ENCODE measurements at regions of chr20 and their contacts with region 1.

Region 1: DNA sequence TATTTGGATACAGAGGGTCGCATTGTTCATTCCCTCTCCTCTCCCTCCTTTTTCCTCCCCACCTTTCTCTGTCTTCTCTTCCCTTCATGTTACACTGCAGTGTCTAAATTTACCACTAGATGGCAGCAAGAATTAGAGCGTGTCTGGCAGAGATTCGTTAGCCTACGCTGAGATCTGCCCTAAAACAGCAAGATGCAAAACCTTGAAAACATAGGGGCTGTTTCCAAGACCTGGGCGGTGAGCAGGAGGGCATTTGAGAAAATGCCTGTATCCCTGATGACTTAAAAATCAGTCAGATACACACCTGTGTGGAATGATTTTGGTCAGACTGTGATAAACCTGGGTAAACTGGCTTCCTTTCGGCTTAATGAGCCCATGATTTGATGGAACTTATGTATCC is 101.5 kb upstream of the ISM1 start:
- DNase-seq: peak in 1 of 5 donors; percentile 17
- ATAC-seq: peak in 3 of 4 donors; percentile 72 to 83 (median 72)
- H3K4me3 ChIP-seq: no peak overlapping the region
- H3K27ac ChIP-seq: no peak overlapping the region
- H3K4me1 ChIP-seq: no peaks in the 10 kb centered on the region
- H3K27me3 ChIP-seq: no peaks in the 10 kb centered on the region
- CTCF ChIP-seq: peak; percentile 80 to 91 (median 86)
- POLR2A ChIP-seq: no peak

Region 2: DNA sequence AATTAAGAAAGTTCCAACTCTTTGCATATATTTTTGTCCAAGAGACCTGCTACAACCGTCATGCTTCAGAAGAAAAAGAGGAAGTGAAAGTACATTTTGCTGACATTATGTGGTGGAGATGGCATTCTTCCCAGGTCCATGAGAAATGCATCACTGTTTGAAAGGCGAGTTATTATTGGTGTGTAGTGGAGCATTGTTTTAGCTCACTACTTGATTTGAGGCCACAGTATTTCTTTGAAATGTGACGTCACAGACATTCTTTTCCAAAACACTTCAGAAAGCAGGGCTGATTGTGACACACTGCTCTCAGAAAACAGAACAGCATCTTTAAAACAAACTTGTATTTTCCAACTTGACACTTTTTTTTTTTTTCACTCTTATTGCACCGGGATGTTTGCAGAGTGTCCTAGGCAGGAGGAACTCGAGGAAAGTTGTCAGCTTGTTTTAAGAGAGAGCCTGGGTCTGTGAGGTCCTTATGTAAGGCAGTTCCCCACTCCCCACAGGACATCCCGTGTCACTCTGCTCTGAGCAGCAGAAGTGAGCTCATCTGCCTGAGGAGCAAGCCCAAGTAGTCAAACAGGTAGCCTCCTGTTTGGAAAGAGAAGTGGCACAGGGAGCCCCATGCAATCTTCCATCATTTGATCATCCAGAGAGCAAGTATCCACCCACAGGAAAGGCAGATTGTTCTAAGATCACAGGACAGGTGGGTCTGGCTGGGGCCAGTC is 109.7 kb before region 1 on chr20:
- intact Hi-C with region 1: no loop called
- DNase-seq: peak in 2 of 5 donors; percentile 38 to 55
- ATAC-seq: peak; percentile 88 to 93 (median 89)
- H3K4me3 ChIP-seq: peak overlapping the region in 11 of 12 donors; percentile 24 to 63 (median 53)
- H3K27ac ChIP-seq: peak overlapping the region; percentile 22 to 85 (median 66)
- H3K4me1 ChIP-seq: peaks cover 0 to 28% (median 14%) of the 10 kb centered on the region in 12 donors
- H3K27me3 ChIP-seq: no peaks in the 10 kb centered on the region
- CTCF ChIP-seq: no peak
- POLR2A ChIP-seq: no peak

Region 3: DNA sequence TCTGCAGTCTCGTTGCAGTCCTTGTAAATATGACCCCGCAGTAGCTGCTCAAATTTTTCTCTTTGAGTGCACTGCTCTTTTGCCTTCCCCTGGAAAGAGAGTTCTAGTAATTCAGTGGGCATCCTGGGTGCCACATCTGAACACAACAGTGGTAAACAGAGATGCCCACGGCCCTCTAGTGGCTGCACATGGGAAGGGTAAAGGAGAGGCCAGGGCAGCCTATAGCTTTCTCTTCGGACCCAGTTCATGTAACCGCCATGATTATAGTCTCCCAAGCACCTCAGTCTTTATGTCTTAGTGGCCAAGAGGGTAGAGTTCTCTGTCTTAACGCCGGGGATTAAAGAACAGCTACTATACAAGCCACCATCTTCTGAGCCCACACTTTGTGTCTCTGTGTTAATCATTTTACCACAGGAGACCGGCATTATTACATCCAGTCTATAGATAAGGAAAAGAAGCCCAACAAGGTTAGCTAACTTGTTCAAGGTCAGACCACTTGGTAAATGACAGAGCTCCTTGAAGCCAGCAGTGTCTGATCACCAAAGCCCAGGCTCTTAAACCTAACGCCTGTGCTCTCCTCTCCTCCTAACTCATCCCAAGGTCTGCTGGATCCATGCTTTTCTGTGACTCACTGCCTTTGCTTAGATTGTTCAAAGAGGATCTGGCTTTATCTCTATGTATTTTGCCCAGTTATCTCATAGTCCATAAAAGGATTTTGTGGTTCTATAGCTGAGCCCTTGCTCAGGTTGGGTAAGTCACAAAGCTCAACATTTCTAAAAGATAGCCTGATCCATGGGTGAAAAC is 183.3 kb after region 1 on chr20:
- intact Hi-C with region 1: loop called in 9 of 10 experiments (anchors 2 to 10 kb)
- DNase-seq: no peak
- ATAC-seq: peak in 3 of 4 donors; percentile 47 to 82 (median 54)
- H3K4me3 ChIP-seq: no peak overlapping the region
- H3K27ac ChIP-seq: no peak overlapping the region
- H3K4me1 ChIP-seq: no peaks in the 10 kb centered on the region
- H3K27me3 ChIP-seq: no peaks in the 10 kb centered on the region
- CTCF ChIP-seq: peak; percentile 39 to 65 (median 52)
- POLR2A ChIP-seq: no peak

Region 4: DNA sequence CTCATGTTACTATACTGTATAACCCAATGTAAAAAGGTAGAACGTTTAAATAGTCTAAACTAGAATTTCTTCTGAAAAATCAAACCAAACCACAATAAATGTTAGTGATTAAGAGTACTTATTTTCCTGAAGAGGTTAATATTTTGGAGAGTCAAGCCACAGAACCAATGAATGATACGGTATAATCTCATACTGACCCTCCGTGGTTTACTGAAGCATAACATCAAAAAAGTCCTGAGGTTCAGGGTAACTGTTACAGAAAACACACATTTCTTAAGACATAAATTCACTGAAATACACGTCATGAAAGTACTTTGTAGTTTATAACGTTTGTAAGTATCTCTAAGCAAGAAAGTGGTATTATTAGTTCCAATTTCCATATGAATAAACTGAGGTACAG is 636.2 kb after region 1 on chr20:
- intact Hi-C with region 1: loop called in 3 of 10 experiments (anchors 10 kb)
- DNase-seq: no peak
- ATAC-seq: no peak
- H3K4me3 ChIP-seq: no peak overlapping the region
- H3K27ac ChIP-seq: no peak overlapping the region
- H3K4me1 ChIP-seq: no peaks in the 10 kb centered on the region
- H3K27me3 ChIP-seq: no peaks in the 10 kb centered on the region
- CTCF ChIP-seq: peak in 5 of 12 donors; percentile 12 to 25 (median 15)
- POLR2A ChIP-seq: no peak

Region 5: DNA sequence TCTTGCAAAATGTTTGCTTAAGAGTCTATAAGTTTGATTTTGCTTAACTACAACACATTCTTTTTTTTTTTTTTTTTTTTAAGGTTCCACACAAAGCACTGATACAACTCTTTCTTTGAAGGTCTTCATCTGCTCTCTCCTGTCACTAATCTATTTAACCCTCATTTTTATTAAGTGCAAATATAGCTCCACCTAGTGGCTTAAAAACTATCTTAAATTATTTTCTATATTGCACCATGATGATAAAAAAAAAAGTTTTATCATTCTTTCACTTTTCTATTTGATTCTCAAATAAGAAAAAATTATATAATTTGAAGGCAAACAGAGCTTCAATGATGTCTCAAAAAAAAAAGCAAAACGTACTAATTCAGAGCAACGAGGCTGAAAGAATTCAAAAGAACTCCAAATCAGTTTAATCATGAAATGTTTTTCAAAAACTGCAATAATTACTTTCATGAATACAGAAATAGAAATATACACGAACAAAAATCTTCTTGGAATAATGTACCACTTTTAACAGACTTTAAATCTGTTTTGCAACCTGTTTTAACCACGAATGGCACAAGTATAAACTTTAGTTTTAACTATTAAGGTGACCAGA is 652.4 kb after region 1 on chr20:
- intact Hi-C with region 1: loop called in 7 of 10 experiments (anchors 2 to 10 kb)
- DNase-seq: no peak
- ATAC-seq: no peak
- H3K4me3 ChIP-seq: no peak overlapping the region
- H3K27ac ChIP-seq: no peak overlapping the region
- H3K4me1 ChIP-seq: no peaks in the 10 kb centered on the region
- H3K27me3 ChIP-seq: no peaks in the 10 kb centered on the region
- CTCF ChIP-seq: peak; percentile 36 to 71 (median 56)
- POLR2A ChIP-seq: no peak

Measured in heart left ventricle (tissue), 16 donors.